Dorsolateral prefrontal cortex (tissue), 120 donors: ENCODE measurements at regions of chr1 and their contacts with region 1.

Region 1: DNA sequence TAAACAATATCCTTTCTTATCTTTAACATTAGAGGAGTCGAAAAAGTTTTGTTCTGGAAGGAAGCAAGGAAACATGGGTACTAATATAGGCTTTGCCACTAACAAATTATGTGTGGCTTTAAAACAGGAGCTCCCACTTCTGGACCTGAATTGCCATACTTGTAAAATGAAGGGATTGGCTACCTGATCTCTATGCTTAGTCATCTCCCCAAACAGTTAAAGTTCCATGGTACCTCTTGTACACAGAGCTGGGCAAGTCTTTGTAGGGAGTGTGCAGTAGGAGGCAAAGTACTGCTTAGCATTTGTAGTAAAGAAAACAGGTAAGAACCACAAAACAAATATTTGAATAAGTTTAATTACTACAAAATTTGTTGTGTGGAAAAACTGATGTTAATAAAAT is 81.3 kb downstream of the MAST2 start:
- DNase-seq: no peak
- H3K4me3 ChIP-seq: no peak overlapping the region
- H3K27ac ChIP-seq: no peak overlapping the region
- H3K27me3 ChIP-seq: no peaks in the 10 kb centered on the region
- CTCF ChIP-seq: no peak

Region 2: DNA sequence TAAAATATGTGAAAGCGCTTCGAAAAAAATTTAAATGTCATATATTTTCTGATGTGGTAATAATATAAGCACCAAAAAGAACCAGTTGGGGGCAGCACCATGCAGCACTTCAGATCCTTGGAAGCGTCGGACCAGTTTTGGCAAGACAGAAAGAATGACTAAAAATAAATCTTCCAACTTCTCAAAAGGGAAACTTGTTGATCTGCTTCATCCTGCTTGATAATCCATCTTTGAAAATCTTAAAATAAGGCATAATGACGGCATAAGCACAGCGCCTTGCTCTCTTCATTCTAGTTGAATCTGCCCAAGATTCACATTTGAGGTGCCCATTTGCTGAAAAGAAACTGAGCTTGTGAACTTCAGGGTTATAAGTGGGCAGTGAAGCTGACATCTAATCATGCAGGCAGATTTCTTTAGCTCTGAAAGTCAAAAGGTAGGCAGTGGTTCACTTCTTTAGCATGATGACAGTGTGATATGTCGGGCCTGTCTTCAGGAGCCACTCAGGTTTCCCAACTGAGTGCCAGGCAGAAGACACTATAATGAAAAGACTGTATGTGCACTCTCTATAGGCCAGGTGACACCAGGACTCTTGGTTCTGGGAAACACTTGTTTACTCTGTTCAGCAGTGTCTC is 524.7 kb before region 1 on chr1:
- intact Hi-C with region 1: loop called in 1 of 2 experiments (anchors 10 kb)
- DNase-seq: peak in 9 of 10 donors; percentile 47 to 84 (median 60)
- H3K4me3 ChIP-seq: peak overlapping the region in 25 of 59 donors; percentile 1 to 48 (median 13)
- H3K27ac ChIP-seq: peak overlapping the region in 58 of 59 donors; percentile 12 to 90 (median 78)
- H3K27me3 ChIP-seq: no peaks in the 10 kb centered on the region
- CTCF ChIP-seq: peak; percentile 61 to 92 (median 86)

Region 3: DNA sequence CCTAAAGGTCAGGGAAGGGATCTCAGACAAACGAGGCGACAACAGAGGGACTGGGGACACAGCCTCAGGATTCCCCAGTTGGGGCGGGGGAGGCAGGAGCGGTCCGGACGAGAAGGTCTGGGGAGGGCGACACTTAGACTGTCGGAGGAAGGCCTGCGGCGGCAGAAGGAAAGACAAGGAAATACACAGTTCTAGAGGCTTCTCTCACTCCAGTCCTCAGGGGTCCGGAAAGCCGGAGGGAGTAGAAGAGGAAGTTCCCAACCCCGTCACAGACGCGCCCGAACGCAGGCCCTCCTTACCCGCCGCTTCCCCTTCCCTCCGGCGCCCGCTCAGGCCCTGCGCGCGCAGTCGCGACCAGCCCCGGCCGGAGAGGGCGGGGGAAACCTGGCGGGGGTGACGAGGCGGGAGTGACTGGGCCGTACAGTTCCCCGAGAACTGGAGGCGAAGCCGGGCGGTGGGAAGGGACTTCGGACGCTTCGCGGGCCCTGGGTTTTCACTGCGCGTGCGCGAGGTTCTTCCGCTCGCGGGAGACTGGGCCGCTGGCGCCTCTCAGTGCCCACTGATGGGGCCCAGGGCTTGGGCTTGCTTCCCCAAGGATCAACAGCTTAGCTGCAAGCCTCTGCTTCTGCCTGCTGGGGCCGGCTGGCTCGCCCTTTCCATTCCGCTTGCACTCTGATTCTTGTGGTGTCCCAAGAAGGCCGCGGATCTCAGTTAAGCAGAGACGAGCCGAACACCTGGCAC is 134.2 kb before region 1 on chr1 and contains the start of gene IPP:
- intact Hi-C with region 1: loop called in 1 of 2 experiments (anchors 5 kb)
- DNase-seq: peak; percentile 87 to 95 (median 92)
- H3K4me3 ChIP-seq: peak within 1 kb of the TSS; percentile 60 to 94 (median 78)
- H3K27ac ChIP-seq: peak within 1 kb of the TSS; percentile 84 to 99 (median 98)
- H3K27me3 ChIP-seq: no peaks in the 10 kb centered on the region
- CTCF ChIP-seq: peak in 54 of 56 donors; percentile 18 to 77 (median 52)
- total RNA-seq, gene IPP: 9.4 to 25.7 (median 16.6) TPM